PC-9 (cell line): ENCODE measurements at regions of chr1 and their contacts with region 1.

Region 1: GRCh38 chr1:156608036-156608674 is 6.9 kb upstream of the GPATCH4 start:
- DNase-seq: peak; percentile 43 to 62
- H3K4me3 ChIP-seq: no peak overlapping the region; the same call in 1 of the 2 replicates
- H3K27ac ChIP-seq: no peak overlapping the region
- H3K4me1 ChIP-seq: peaks cover 18% of the 10 kb centered on the region; the same call in 1 of the 2 replicates
- H3K27me3 ChIP-seq: peaks cover 16% of the 10 kb centered on the region; the same call in 1 of the 2 replicates
- CTCF ChIP-seq: peak; percentile 84

Region 2: DNA sequence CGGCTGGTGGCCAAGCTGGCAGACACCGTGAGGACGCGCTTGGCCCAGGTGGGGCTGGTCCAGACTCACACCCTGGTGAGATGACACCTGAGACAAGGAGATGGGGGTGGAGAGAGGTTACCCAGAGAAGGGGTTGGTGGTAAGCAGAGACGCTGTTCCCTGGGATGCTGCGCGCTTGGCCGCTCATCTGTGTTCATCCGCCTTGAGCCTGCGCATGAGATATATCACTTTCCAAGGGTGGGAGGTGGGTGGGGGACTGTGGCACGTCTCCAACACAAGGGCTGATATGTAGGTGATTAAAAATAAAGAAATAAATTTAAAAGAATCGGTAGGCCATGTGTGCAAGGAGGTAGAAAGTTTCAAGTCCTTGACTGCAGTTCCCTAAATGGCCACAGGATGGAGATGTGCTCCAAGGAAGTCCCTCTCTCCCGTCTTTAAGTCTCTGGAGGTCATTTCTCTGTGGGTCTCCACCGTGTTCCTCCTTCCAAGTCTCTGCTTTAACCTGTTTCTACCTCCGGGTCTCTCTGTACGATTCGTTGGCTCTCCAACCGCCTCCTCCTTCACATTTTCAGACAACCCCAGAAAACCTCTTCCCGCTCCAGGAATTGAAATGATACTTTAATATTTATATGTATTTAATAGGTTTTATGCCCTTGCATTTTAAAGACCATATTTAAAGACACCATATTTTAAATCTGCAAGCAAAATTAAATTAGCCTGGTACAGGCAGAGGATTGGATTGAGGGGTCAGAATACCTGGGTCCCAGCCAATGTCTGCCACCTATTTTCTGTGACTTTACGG is 24.1 kb before region 1 on chr1:
- CTCF ChIA-PET with region 1: no interaction called
- POLR2A ChIA-PET with region 1: interaction called, 9 read pairs
- intact Hi-C with region 1: loop called (anchors 1 kb)
- DNase-seq: peak; percentile 61 to 62
- H3K4me3 ChIP-seq: no peak overlapping the region
- H3K27ac ChIP-seq: no peak overlapping the region
- H3K4me1 ChIP-seq: no peaks in the 10 kb centered on the region
- H3K27me3 ChIP-seq: no peaks in the 10 kb centered on the region
- CTCF ChIP-seq: peak; percentile 91